ENCODE measurements at regions of chr10 and their contacts with region 1.

Region 1: GRCh38 chr10:122342293-122343134 is 32.0 kb upstream of the PLEKHA1 start:
- DNase-seq: peak in 2 of 5 donors; percentile 43 to 44
- ATAC-seq: peak in 2 of 4 donors; percentile 38 to 46
- H3K4me3 ChIP-seq: no peak overlapping the region
- H3K27ac ChIP-seq: peak overlapping the region in 7 of 12 donors; percentile 30 to 79 (median 69)
- H3K4me1 ChIP-seq: peaks cover 0 to 39% (median 8%) of the 10 kb centered on the region in 12 donors
- H3K27me3 ChIP-seq: no peaks in the 10 kb centered on the region
- CTCF ChIP-seq: peak; percentile 75 to 92 (median 82)
- POLR2A ChIP-seq: no peak

Region 2: GRCh38 chr10:122258136-122259074 is 84.1 kb before region 1 on chr10:
- intact Hi-C with region 1: no loop called
- DNase-seq: no peak
- ATAC-seq: peak in 3 of 4 donors; percentile 30 to 55 (median 43)
- H3K4me3 ChIP-seq: no peak overlapping the region
- H3K27ac ChIP-seq: no peak overlapping the region
- H3K4me1 ChIP-seq: peaks cover 0 to 8% (median 0%) of the 10 kb centered on the region in 12 donors
- H3K27me3 ChIP-seq: no peaks in the 10 kb centered on the region
- CTCF ChIP-seq: no peak
- POLR2A ChIP-seq: no peak

Region 3: GRCh38 chr10:122271076-122271475 is 71.4 kb before region 1 on chr10 and contains the start of gene BTBD16:
- intact Hi-C with region 1: no loop called
- DNase-seq: no peak
- ATAC-seq: no peak
- H3K4me3 ChIP-seq: no peak within 1 kb of the TSS
- H3K27ac ChIP-seq: no peak within 1 kb of the TSS
- H3K4me1 ChIP-seq: peaks cover 0 to 13% (median 0%) of the 10 kb centered on the region in 12 donors
- H3K27me3 ChIP-seq: no peaks in the 10 kb centered on the region
- CTCF ChIP-seq: no peak
- POLR2A ChIP-seq: no peak
- total RNA-seq, gene BTBD16: 0.23 to 0.25 TPM in 2 of 9 donors, not detected in the others

Region 4: GRCh38 chr10:122298598-122299301 is 43.8 kb before region 1 on chr10:
- intact Hi-C with region 1: loop called in 8 of 10 experiments (anchors 2 to 5 kb)
- DNase-seq: peak; percentile 64 to 73 (median 66)
- ATAC-seq: peak in 3 of 4 donors; percentile 82 to 90 (median 88)
- H3K4me3 ChIP-seq: peak overlapping the region in 7 of 12 donors; percentile 15 to 37 (median 24)
- H3K27ac ChIP-seq: no peak overlapping the region
- H3K4me1 ChIP-seq: peaks cover 0 to 13% (median 0%) of the 10 kb centered on the region in 12 donors
- H3K27me3 ChIP-seq: no peaks in the 10 kb centered on the region
- CTCF ChIP-seq: peak; percentile 78 to 97 (median 92)
- POLR2A ChIP-seq: no peak

Region 5: GRCh38 chr10:122368502-122369256 is 26.2 kb after region 1 on chr10:
- intact Hi-C with region 1: loop called in 1 of 10 experiments (anchors 2 kb)
- DNase-seq: peak in 3 of 5 donors; percentile 27 to 41 (median 34)
- ATAC-seq: peak in 1 of 4 donors; percentile 41
- H3K4me3 ChIP-seq: peak overlapping the region in 4 of 12 donors; percentile 13 to 31 (median 16)
- H3K27ac ChIP-seq: peak overlapping the region in 8 of 12 donors; percentile 19 to 59 (median 46)
- H3K4me1 ChIP-seq: peaks cover 0 to 47% (median 23%) of the 10 kb centered on the region in 12 donors
- H3K27me3 ChIP-seq: peaks cover 0 to 3% (median 0%) of the 10 kb centered on the region in 9 donors
- CTCF ChIP-seq: no peak
- POLR2A ChIP-seq: no peak

Region 6: DNA sequence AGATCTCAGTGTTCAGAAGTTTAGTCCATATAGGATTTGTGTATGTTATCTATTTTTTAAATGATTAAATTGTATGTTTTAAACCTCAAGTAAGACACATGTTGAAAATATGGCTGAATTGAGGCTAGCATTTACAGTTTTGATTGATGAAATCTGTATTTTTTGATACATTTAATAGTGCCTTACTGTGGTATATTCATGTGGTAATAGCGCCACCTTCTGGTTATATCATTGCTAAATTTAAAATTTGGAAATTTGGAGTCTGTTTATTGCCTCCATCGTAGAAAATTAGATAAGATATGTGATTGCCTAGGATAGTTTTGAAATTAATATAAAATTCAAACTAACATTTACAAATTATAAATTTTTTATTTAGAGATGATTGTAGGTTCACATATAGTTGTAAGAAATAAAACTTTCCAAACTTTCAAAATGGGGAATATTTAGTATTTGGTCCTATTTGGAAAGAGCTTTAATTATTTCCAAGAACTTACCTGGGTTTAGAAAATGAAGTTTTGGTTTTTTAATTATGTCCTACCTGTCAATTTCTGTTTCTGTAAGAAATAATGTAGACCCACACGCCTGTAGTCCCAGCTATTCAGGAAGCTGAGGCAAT is 92.8 kb after region 1 on chr10:
- intact Hi-C with region 1: loop called (anchors 1 to 5 kb)
- DNase-seq: no peak
- ATAC-seq: peak in 3 of 4 donors; percentile 41 to 59 (median 46)
- H3K4me3 ChIP-seq: no peak overlapping the region
- H3K27ac ChIP-seq: no peak overlapping the region
- H3K4me1 ChIP-seq: no peaks in the 10 kb centered on the region
- H3K27me3 ChIP-seq: no peaks in the 10 kb centered on the region
- CTCF ChIP-seq: peak; percentile 60 to 85 (median 74)
- POLR2A ChIP-seq: no peak

Region 7: GRCh38 chr10:122557516-122557915 is 215.0 kb after region 1 on chr10:
- intact Hi-C with region 1: loop called in 3 of 10 experiments (anchors 5 to 10 kb)
- DNase-seq: no peak
- ATAC-seq: no peak
- H3K4me3 ChIP-seq: no peak overlapping the region
- H3K27ac ChIP-seq: no peak overlapping the region
- H3K4me1 ChIP-seq: no peaks in the 10 kb centered on the region
- H3K27me3 ChIP-seq: peaks cover 0 to 6% (median 0%) of the 10 kb centered on the region in 9 donors
- CTCF ChIP-seq: no peak
- POLR2A ChIP-seq: no peak